ENCODE measurements at regions of chr1 and their contacts with region 1.

Region 1: DNA sequence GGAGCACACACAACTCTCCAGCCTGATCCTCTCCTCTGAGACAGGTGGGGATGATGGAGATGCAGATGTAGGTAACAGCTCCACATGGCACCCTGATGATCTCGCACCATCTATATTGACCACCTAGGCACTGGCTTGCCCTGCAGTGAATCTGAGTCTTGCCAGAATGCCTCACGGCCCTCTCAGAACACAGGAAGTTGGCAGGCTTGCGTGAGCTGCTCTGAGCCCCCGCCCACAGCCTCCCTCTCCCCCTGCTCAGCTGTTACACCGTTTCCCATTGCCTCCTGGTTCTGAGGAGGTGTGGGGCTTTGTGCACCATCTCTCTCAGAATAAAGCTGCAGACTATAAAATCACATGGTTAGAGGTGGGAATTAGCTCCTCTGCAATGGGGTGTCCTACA is 48.0 kb downstream of the URB2 start:
- DNase-seq: peak in 1 of 4 experiments; percentile 1
- ATAC-seq: no peak
- H3K4me3 ChIP-seq: no peak overlapping the region
- H3K27ac ChIP-seq: no peak overlapping the region
- H3K4me1 ChIP-seq: no peaks in the 10 kb centered on the region
- H3K27me3 ChIP-seq: no peaks in the 10 kb centered on the region
- CTCF ChIP-seq: no peak
- EP300 ChIP-seq: no peak
- POLR2A ChIP-seq: no peak
- RAD21 ChIP-seq: no peak

Region 2: DNA sequence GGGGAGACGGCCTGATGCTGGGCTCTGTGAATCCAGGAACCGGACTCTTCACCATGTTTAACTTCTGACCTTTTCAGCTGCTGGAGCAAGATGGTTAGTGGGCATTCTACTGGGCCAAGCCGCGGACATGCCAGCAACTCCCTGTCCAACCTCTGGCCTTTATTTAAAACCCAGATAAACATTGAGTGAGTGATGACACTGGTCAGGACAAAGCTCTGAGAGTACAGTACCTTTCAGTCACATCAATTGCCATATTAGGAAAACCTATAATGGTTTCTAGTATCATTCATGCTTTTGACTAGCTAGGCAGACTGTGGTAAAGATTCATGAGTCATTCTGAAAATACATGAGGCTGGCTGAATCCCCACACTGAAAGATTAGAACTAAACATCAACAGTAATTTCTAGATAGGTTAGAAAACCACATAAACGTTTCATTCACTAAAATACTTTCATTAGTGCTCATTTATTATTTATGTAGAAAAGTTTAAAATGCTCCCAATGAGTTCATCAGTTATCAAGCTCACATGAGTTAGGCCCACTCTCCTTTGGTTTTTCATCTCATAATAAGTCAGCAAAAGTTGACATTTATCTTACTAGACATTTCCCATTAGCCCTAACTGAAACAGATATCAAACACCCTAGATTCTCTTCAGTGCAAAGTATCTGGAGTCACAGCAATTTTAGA is 233.0 kb before region 1 on chr1:
- CTCF ChIA-PET with region 1: no interaction called
- POLR2A ChIA-PET with region 1: no interaction called
- in situ Hi-C with region 1: no loop called
- intact Hi-C with region 1: no loop called
- DNase-seq: no peak
- ATAC-seq: no peak; the same call in 2 of the 3 replicates
- H3K4me3 ChIP-seq: no peak overlapping the region
- H3K27ac ChIP-seq: 0 out of 3 replicates have a peak overlapping the region, but pooled peaks have one; percentile 3
- H3K4me1 ChIP-seq: no peaks in the 10 kb centered on the region
- H3K27me3 ChIP-seq: no peaks in the 10 kb centered on the region; a peak in 1 of 5 replicates
- CTCF ChIP-seq: no peak
- EP300 ChIP-seq: no peak
- POLR2A ChIP-seq: no peak
- RAD21 ChIP-seq: no peak

Region 3: DNA sequence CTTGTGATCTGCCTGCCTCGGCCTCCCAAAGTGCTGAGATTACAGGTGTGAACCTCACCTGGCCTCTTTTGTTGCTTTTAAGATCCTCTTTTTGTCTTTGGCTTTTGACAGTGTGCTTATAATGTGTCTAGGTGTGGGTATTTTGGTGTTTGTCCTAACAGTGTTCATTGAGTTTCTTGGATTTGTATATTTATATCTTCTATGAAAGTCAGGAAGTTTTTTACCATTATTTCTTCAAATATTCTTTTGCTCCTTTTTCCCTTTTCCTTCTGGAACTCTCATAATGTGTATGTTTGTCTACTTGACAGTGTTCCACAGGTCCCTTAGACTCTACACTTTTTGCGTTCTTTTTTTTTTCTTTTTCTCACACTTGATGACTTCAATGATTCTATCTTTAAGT is 11.1 kb after region 1 on chr1:
- CTCF ChIA-PET with region 1: no interaction called
- POLR2A ChIA-PET with region 1: interaction called, 9 read pairs
- in situ Hi-C with region 1: no loop called
- intact Hi-C with region 1: loop called (anchors 1 kb)
- DNase-seq: no peak
- ATAC-seq: no peak
- H3K4me3 ChIP-seq: no peak overlapping the region
- H3K27ac ChIP-seq: no peak overlapping the region
- H3K4me1 ChIP-seq: no peaks in the 10 kb centered on the region
- H3K27me3 ChIP-seq: peaks cover 8 to 13% of the 10 kb centered on the region in 2 experiments; a peak in 4 of 5 replicates
- CTCF ChIP-seq: no peak
- EP300 ChIP-seq: no peak
- POLR2A ChIP-seq: no peak
- RAD21 ChIP-seq: no peak

Region 4: GRCh38 chr1:229893762-229894444 is 219.9 kb after region 1 on chr1:
- CTCF ChIA-PET with region 1: no interaction called
- POLR2A ChIA-PET with region 1: no interaction called
- in situ Hi-C with region 1: no loop called
- intact Hi-C with region 1: no loop called
- DNase-seq: no peak
- ATAC-seq: no peak; the same call in 2 of the 3 replicates
- H3K4me3 ChIP-seq: no peak overlapping the region
- H3K27ac ChIP-seq: no peak overlapping the region
- H3K4me1 ChIP-seq: no peaks in the 10 kb centered on the region
- H3K27me3 ChIP-seq: peaks cover 6 to 14% of the 10 kb centered on the region in 2 experiments; a peak in 4 of 5 replicates
- CTCF ChIP-seq: no peak
- EP300 ChIP-seq: no peak
- POLR2A ChIP-seq: no peak
- RAD21 ChIP-seq: no peak